ENCODE measurements at regions of chr3 and their contacts with region 1.

Region 1: DNA sequence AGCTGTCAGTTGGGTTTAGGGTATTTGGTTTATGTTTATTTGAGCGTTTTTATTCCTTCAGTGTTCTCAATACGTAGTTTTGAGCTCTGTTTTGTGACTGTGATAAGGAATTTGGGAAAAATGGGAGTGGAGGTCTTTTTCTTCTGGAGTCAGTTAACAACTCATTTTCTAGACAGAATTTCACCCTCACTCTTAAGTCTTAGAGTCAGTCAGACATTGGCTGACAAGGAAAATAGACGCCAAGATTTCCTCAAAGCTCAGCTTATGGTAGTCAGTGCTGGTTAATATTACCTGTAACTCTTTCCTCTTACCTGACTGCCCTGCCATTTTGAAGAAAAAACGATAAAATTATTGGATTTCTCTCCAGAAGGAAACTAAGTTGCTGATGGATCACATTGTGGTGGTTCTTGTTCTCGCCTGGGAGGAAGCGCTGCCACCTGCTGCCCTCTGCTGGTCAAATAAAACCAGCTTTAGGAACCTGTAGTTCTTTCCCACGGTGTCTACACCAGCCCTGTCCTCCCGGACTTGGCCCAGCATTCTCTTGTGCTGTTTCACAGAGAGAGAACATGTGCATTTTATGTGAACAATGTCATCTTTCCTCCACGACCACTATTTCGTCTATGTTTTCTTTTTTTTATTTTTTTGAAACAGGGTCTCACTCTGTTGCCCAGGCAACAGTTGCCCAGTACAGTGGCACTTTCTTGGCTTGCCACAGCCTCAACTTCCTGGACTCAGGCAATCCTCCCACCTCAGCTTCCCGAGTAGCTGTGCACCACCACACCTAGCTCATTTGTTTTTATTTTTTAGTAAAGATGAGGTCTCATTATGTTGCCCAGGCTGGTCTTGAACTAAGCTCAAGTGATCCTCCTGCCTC is 41.4 kb upstream of the UMPS start:
- DNase-seq: peak; percentile 54
- H3K4me3 Mint-ChIP-seq: no peak overlapping the region
- H3K27ac Mint-ChIP-seq: no peak overlapping the region
- H3K4me1 Mint-ChIP-seq: no peaks in the 10 kb centered on the region
- H3K27me3 Mint-ChIP-seq: peaks cover 21% of the 10 kb centered on the region

Region 2: GRCh38 chr3:124559881-124560574 is 128.8 kb before region 1 on chr3:
- intact Hi-C with region 1: loop called (anchors 1 kb)
- DNase-seq: peak; percentile 24
- H3K4me3 Mint-ChIP-seq: no peak overlapping the region
- H3K27ac Mint-ChIP-seq: no peak overlapping the region
- H3K4me1 Mint-ChIP-seq: no peaks in the 10 kb centered on the region
- H3K27me3 Mint-ChIP-seq: peaks cover 26% of the 10 kb centered on the region

Region 3: GRCh38 chr3:124584552-124585391 is 104.0 kb before region 1 on chr3:
- intact Hi-C with region 1: loop called (anchors 5 kb)
- DNase-seq: no peak
- H3K4me3 Mint-ChIP-seq: peak overlapping the region; percentile 31
- H3K27ac Mint-ChIP-seq: no peak overlapping the region
- H3K4me1 Mint-ChIP-seq: peaks cover 7% of the 10 kb centered on the region
- H3K27me3 Mint-ChIP-seq: peaks cover 47% of the 10 kb centered on the region

Region 4: GRCh38 chr3:124620600-124621063 is 68.2 kb before region 1 on chr3:
- intact Hi-C with region 1: loop called (anchors 1 kb)
- DNase-seq: peak; percentile 11
- H3K4me3 Mint-ChIP-seq: peak overlapping the region; percentile 42
- H3K27ac Mint-ChIP-seq: peak overlapping the region; percentile 73
- H3K4me1 Mint-ChIP-seq: peaks cover 22% of the 10 kb centered on the region
- H3K27me3 Mint-ChIP-seq: peaks cover 6% of the 10 kb centered on the region

Region 5: DNA sequence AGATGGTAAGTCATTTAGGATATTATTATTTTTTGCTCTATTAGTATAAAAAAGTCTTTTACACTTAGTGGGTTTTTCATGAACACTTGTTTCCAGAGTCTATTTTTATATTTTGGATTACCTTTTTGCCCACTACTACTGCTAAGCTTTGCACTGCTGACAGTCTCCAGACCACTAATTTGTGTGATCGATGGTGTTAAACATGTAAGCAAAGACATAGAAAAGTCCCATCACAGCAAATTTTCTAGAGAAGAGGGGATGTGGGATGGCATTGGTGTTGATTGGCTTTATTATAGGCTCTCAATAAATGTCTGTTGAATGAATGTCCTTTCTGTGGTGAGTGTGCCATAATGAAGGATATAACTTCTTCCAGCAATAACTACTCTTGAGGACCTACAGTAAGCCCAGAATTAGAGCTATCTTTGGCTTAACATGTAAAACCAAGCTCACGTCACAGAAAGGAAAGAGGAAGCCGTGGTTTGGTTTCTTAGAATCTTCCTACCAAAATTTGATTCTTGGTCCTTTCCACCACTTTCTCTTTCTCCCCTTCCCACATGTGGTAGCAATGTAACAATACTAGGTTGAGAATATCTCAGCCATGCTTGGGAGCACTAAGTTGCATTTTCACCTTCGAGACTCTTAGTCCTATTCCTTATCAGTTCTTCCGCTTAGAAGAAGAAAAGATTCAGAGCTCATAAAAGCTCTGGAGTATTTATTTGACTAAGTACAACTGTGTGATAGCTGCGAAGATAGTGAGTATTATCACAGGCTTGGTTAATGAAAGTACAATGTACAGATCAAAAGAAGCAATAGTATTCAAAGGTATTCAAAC is 49.2 kb before region 1 on chr3:
- intact Hi-C with region 1: loop called (anchors 2 kb)
- DNase-seq: no peak
- H3K4me3 Mint-ChIP-seq: peak overlapping the region; percentile 62
- H3K27ac Mint-ChIP-seq: peak overlapping the region; percentile 80
- H3K4me1 Mint-ChIP-seq: peaks cover 52% of the 10 kb centered on the region
- H3K27me3 Mint-ChIP-seq: peaks cover 52% of the 10 kb centered on the region

Region 6: GRCh38 chr3:124905849-124906248 is 217.0 kb after region 1 on chr3:
- intact Hi-C with region 1: loop called (anchors 1 kb)
- DNase-seq: no peak
- H3K4me3 Mint-ChIP-seq: no peak overlapping the region
- H3K27ac Mint-ChIP-seq: no peak overlapping the region
- H3K4me1 Mint-ChIP-seq: peaks cover 4% of the 10 kb centered on the region
- H3K27me3 Mint-ChIP-seq: peaks cover 23% of the 10 kb centered on the region

Measured in activated T-helper 1 cell treated with anti-CD3 and anti-CD28 coated beads, Interleukin-12 subunit alpha, Interleukin-12 subunit beta, Interleukin-2, Interleukin-4 antibody, amounts not matched to agents 30 ng/mL and 10 ng/mL and 1 ng/mL, durations not matched to agents 14 hours and 24 hours and 36 hours (primary cell).